ENCODE measurements at regions of chr20 and their contacts with region 1.

Region 1: GRCh38 chr20:49219089-49219923 is at the start of gene DDX27:
- DNase-seq: peak; percentile 99
- ATAC-seq: peak; percentile 94
- H3K4me3 ChIP-seq: peak within 1 kb of the TSS; percentile 90
- H3K27ac ChIP-seq: peak within 1 kb of the TSS; percentile 95
- H3K4me1 ChIP-seq: no peaks in the 10 kb centered on the region
- H3K27me3 ChIP-seq: no peaks in the 10 kb centered on the region
- CTCF ChIP-seq: no peak
- EP300 ChIP-seq: no peak
- POLR2A ChIP-seq: peak; percentile 97
- RAD21 ChIP-seq: no peak
- polyA plus RNA-seq, gene DDX27: 19.8 to 33.4 TPM

Region 2: DNA sequence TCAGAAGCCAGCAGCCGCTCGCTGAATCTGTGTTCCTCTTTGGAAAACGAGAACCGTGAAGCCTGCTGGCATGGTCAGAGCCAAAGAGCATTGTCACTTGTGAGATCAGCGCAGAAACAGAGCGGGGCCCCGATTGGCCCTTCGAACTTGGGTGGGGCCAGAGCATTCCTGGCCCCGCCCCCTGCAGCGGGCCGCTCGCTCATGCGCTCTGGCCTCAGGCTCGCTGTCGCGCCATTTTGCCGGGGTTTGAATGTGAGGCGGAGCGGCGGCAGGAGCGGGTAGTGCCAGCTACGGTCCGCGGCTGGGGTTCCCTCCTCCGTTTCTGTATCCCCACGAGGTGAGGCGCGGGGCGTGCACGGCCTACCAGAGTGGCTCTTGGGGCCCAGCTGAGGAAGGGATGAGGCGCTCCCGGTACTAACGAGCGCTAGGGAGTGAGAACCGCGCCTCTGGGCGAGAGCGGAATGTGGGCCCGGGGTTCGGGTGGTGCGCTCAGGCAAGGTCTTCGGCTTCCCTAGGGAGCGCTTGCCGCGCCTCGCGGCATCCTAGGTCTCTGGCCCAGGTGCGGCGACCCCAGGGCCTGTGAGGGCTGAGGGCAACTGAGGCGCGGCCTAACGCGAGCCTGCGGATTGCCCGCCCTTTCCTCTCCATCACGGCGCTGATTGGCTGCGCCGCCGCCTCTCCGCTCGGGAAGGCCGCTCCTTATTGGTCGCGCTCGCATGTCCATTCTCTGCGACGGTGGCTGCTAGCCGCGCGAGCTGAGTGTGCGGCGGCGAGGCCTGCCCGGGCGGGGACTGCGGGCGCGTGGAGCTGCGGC is 173.0 kb before region 1 on chr20 and contains the start of gene CSE1L:
- CTCF ChIA-PET with region 1: interaction called, 10 read pairs
- POLR2A ChIA-PET with region 1: no interaction called
- RAD21 ChIA-PET with region 1: no interaction called
- SMC1A ChIA-PET with region 1: interaction called, 3 read pairs
- in situ Hi-C with region 1: no loop called
- intact Hi-C with region 1: no loop called
- DNase-seq: peak; percentile 76
- ATAC-seq: peak; percentile 97
- H3K4me3 ChIP-seq: peak within 1 kb of the TSS; percentile 80
- H3K27ac ChIP-seq: peak within 1 kb of the TSS; percentile 80
- H3K4me1 ChIP-seq: peaks cover 4% of the 10 kb centered on the region
- H3K27me3 ChIP-seq: no peaks in the 10 kb centered on the region
- CTCF ChIP-seq: no peak
- EP300 ChIP-seq: no peak
- POLR2A ChIP-seq: peak; percentile 80
- RAD21 ChIP-seq: no peak
- polyA plus RNA-seq, gene CSE1L: 72.4 to 74.1 TPM

Region 3: DNA sequence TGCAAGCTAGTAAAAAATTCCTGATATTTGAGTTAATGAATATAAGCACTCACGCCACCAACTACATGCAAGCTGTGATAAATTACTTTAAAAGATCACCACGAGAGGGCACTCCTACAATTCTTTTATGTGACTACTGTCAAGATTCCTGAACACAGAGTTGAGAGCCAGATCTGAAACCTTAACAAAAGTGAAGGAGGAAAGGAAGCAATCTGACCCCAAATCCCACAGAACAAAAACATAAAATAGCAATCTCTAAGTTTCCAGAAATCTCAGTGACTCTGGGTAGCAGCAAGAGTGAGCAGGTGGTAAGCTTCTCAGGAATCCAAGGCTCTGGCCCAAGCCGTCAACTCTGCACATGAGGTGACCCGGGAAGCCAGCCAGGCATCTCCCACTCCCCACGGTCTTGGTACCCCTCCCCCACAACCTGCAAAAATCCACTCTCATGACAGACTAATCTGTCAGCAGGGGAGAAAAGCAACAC is 86.3 kb before region 1 on chr20:
- CTCF ChIA-PET with region 1: interaction called, 333 read pairs
- POLR2A ChIA-PET with region 1: interaction called, 19 read pairs
- RAD21 ChIA-PET with region 1: interaction called, 79 read pairs
- SMC1A ChIA-PET with region 1: interaction called, 65 read pairs
- in situ Hi-C with region 1: loop called (anchors 5 kb)
- intact Hi-C with region 1: loop called (anchors 1 kb)
- DNase-seq: peak; percentile 28
- ATAC-seq: peak; percentile 85
- H3K4me3 ChIP-seq: no peak overlapping the region
- H3K27ac ChIP-seq: no peak overlapping the region
- H3K4me1 ChIP-seq: no peaks in the 10 kb centered on the region; the same call in 1 of the 2 replicates
- H3K27me3 ChIP-seq: no peaks in the 10 kb centered on the region
- CTCF ChIP-seq: peak; percentile 31 to 63 (median 53); a peak in 5 of 6 replicates
- EP300 ChIP-seq: no peak
- POLR2A ChIP-seq: no peak
- RAD21 ChIP-seq: peak; percentile 79

Region 4: GRCh38 chr20:49166534-49167449 is 52.5 kb before region 1 on chr20:
- CTCF ChIA-PET with region 1: interaction called, 64 read pairs
- POLR2A ChIA-PET with region 1: interaction called, 25 read pairs
- RAD21 ChIA-PET with region 1: interaction called, 26 read pairs
- SMC1A ChIA-PET with region 1: interaction called, 13 read pairs
- in situ Hi-C with region 1: no loop called
- intact Hi-C with region 1: no loop called
- DNase-seq: no peak
- ATAC-seq: peak; percentile 90
- H3K4me3 ChIP-seq: peak overlapping the region; percentile 62
- H3K27ac ChIP-seq: peak overlapping the region; percentile 83
- H3K4me1 ChIP-seq: peaks cover 37% of the 10 kb centered on the region
- H3K27me3 ChIP-seq: no peaks in the 10 kb centered on the region
- CTCF ChIP-seq: no peak
- EP300 ChIP-seq: 0 out of 4 replicates have a peak, but pooled peaks of 1 of the 2 experiments have one; percentile 21
- POLR2A ChIP-seq: no peak
- RAD21 ChIP-seq: no peak

Region 5: DNA sequence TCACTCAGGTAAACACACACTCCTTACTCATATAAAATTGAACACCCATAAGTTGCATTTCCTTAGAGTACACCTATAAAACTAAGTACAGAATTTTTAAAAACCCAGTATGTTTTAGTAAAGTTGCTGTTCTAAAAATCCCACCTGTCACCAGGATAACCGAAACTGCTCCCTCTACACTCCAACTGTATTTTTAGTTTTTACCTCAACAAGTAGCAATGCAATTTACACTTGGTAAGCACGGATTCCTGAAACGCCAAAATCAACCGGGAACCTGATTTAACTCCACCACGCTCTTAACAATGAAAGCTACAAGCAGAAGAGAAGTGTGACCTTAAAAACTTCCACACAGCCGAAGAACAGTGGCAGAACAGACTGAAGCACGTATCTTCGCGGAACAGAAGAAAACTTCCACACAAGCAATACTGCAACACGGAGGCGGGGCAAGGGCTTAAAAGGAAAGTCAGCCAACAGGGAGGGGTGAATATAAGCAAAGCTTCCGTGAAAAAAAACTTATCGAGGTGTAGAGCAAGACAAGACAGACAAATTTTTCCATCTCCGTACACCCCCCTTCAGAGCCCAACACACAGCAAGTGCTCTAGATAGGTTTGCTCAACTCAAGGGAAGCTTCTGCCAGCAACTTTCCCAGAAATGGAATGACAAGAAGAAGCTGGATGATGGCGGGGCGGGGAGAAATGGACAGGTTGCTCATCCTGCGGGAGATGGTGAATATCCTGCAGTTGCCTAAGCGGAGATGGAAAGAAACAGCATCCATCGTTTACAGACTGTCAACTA is 32.6 kb before region 1 on chr20:
- CTCF ChIA-PET with region 1: interaction called, 80 read pairs
- POLR2A ChIA-PET with region 1: interaction called, 5 read pairs
- RAD21 ChIA-PET with region 1: interaction called, 6 read pairs
- SMC1A ChIA-PET with region 1: interaction called, 27 read pairs
- in situ Hi-C with region 1: no loop called
- intact Hi-C with region 1: no loop called
- DNase-seq: no peak
- ATAC-seq: peak; percentile 46
- H3K4me3 ChIP-seq: peak overlapping the region; percentile 81
- H3K27ac ChIP-seq: peak overlapping the region; percentile 83
- H3K4me1 ChIP-seq: 0 out of 2 replicates have a peak, but pooled peaks cover 3% of the 10 kb centered on the region
- H3K27me3 ChIP-seq: no peaks in the 10 kb centered on the region
- CTCF ChIP-seq: no peak
- EP300 ChIP-seq: no peak
- POLR2A ChIP-seq: no peak
- RAD21 ChIP-seq: no peak

Region 6: GRCh38 chr20:49207076-49207475 is 12.2 kb before region 1 on chr20:
- CTCF ChIA-PET with region 1: interaction called, 18 read pairs
- POLR2A ChIA-PET with region 1: no interaction called
- RAD21 ChIA-PET with region 1: interaction called, 3 read pairs
- SMC1A ChIA-PET with region 1: interaction called, 4 read pairs
- in situ Hi-C with region 1: no loop called
- intact Hi-C with region 1: no loop called
- DNase-seq: no peak
- ATAC-seq: peak; percentile 83
- H3K4me3 ChIP-seq: no peak overlapping the region
- H3K27ac ChIP-seq: no peak overlapping the region
- H3K4me1 ChIP-seq: no peaks in the 10 kb centered on the region
- H3K27me3 ChIP-seq: no peaks in the 10 kb centered on the region
- CTCF ChIP-seq: peak; percentile 35 to 50 (median 40); a peak in 5 of 6 replicates
- EP300 ChIP-seq: no peak
- POLR2A ChIP-seq: no peak
- RAD21 ChIP-seq: peak; percentile 67

Region 7: DNA sequence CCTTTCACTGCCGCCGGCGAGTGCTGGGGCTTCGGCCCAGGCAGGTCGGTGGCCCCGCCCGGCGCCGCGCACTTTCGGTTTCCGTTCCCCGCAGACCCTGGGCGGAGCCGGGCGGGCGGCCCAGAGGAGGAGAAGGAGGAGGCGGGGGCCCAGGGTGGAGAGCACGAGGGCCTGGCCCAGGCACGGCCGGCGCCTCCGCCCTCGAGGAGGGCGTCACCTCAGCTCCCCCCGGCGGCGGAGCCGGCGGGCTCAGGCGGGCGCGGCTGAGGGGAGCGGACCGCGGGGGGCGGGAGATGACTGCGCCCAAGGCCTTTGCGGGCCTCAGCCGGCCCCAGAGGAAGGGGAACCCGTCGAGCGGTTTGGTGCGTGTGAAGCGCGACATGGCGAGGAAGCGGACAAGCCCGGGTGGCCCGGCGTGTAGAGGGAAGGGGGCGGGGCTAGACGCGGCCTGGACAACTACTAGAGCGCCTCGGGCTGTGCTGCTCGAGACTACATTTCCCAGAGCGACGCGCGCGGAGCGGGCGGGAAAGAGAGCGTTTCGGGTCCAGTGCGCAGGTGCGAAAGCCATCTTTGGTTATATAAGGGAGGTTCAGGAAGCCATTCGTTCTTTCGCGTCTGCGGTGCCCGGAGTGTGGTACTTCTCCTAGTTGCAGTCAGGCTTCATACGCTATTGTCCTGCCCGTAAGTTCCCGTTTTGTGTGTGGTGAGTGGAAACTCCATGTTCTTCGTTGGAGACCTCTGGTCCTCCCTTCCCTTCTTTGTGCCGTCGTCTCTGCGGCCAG is 58.9 kb after region 1 on chr20 and contains the start of gene ZNFX1:
- CTCF ChIA-PET with region 1: interaction called, 14 read pairs
- POLR2A ChIA-PET with region 1: interaction called, 5 read pairs
- RAD21 ChIA-PET with region 1: interaction called, 4 read pairs
- SMC1A ChIA-PET with region 1: interaction called, 4 read pairs
- in situ Hi-C with region 1: no loop called
- intact Hi-C with region 1: loop called (anchors 2 kb)
- DNase-seq: peak; percentile 95
- ATAC-seq: peak; percentile 85
- H3K4me3 ChIP-seq: peak within 1 kb of the TSS; percentile 95
- H3K27ac ChIP-seq: peak within 1 kb of the TSS; percentile 92
- H3K4me1 ChIP-seq: peaks cover 3% of the 10 kb centered on the region; the same call in 1 of the 2 replicates
- H3K27me3 ChIP-seq: no peaks in the 10 kb centered on the region
- CTCF ChIP-seq: peak in 2 of 3 experiments; percentile 3 to 24; a peak in 2 of 6 replicates
- EP300 ChIP-seq: 0 out of 4 replicates have a peak, but pooled peaks of 1 of the 2 experiments have one; percentile 9
- POLR2A ChIP-seq: peak; percentile 99
- RAD21 ChIP-seq: no peak
- polyA plus RNA-seq, gene ZNFX1: 7.4 to 14.6 TPM

Region 8: GRCh38 chr20:49293122-49293521 is 73.8 kb after region 1 on chr20:
- CTCF ChIA-PET with region 1: no interaction called
- POLR2A ChIA-PET with region 1: no interaction called
- RAD21 ChIA-PET with region 1: no interaction called
- SMC1A ChIA-PET with region 1: no interaction called
- in situ Hi-C with region 1: no loop called
- intact Hi-C with region 1: no loop called
- DNase-seq: no peak
- ATAC-seq: no peak
- H3K4me3 ChIP-seq: no peak overlapping the region
- H3K27ac ChIP-seq: no peak overlapping the region
- H3K4me1 ChIP-seq: peaks cover 2% of the 10 kb centered on the region; the same call in 1 of the 2 replicates
- H3K27me3 ChIP-seq: no peaks in the 10 kb centered on the region
- CTCF ChIP-seq: no peak
- EP300 ChIP-seq: no peak
- POLR2A ChIP-seq: no peak
- RAD21 ChIP-seq: no peak

Measured in GM12878 (cell line).